CD4-positive, alpha-beta memory T cell (primary cell): ENCODE measurements at regions of chr11 and their contacts with region 1.

Region 1: GRCh38 chr11:116732271-116733042 is 40.3 kb downstream of the BUD13 start:
- DNase-seq: peak in 4 of 5 donors; percentile 41 to 50 (median 44)
- H3K4me3 ChIP-seq: no peak overlapping the region
- H3K4me3 Mint-ChIP-seq: peak overlapping the region in 1 of 8 donors; percentile 51
- H3K27ac ChIP-seq: no peak overlapping the region
- H3K27ac Mint-ChIP-seq: no peak overlapping the region
- H3K4me1 ChIP-seq: peaks cover 8% of the 10 kb centered on the region
- H3K4me1 Mint-ChIP-seq: peaks cover 4 to 9% (median 7%) of the 10 kb centered on the region in 4 donors
- H3K27me3 ChIP-seq: no peaks in the 10 kb centered on the region
- H3K27me3 Mint-ChIP-seq: peaks cover 2 to 8% of the 10 kb centered on the region in 2 donors

Region 2: DNA sequence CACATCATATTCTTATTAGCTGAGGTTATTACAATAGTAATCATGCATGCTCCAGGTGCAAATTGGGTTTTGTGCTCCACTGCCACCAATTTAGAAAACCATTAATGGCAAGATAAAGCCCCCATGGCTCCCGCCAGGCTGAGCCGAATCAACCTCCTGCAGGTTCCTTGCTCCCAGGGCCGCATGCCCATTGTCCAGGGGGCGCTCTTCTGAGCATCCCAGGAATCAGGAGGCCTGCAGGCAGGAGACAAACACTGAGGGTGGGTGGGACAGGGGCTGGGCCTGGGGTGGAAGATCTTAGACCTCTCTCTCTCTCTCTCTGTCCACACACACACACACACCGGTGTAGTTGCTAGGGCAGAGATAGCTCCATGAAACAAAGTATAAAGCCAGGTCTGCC is 17.1 kb before region 1 on chr11:
- CTCF ChIA-PET with region 1: no interaction called
- POLR2A ChIA-PET with region 1: no interaction called
- intact Hi-C with region 1: no loop called
- DNase-seq: no peak
- H3K4me3 ChIP-seq: no peak overlapping the region
- H3K4me3 Mint-ChIP-seq: no peak overlapping the region
- H3K27ac ChIP-seq: no peak overlapping the region
- H3K27ac Mint-ChIP-seq: no peak overlapping the region
- H3K4me1 ChIP-seq: no peaks in the 10 kb centered on the region
- H3K4me1 Mint-ChIP-seq: no peaks in the 10 kb centered on the region
- H3K27me3 ChIP-seq: no peaks in the 10 kb centered on the region
- H3K27me3 Mint-ChIP-seq: peaks cover 12 to 18% of the 10 kb centered on the region in 2 donors

Region 3: GRCh38 chr11:116750070-116750718 is 17.7 kb after region 1 on chr11:
- CTCF ChIA-PET with region 1: interaction called, 14 read pairs
- POLR2A ChIA-PET with region 1: no interaction called
- intact Hi-C with region 1: no loop called
- DNase-seq: no peak
- H3K4me3 ChIP-seq: no peak overlapping the region
- H3K4me3 Mint-ChIP-seq: no peak overlapping the region
- H3K27ac ChIP-seq: no peak overlapping the region
- H3K27ac Mint-ChIP-seq: no peak overlapping the region
- H3K4me1 ChIP-seq: no peaks in the 10 kb centered on the region
- H3K4me1 Mint-ChIP-seq: peaks cover 0 to 1% (median 0%) of the 10 kb centered on the region in 4 donors
- H3K27me3 ChIP-seq: no peaks in the 10 kb centered on the region
- H3K27me3 Mint-ChIP-seq: no peaks in the 10 kb centered on the region